ENCODE measurements at regions of chr16 and their contacts with region 1.

Region 1: DNA sequence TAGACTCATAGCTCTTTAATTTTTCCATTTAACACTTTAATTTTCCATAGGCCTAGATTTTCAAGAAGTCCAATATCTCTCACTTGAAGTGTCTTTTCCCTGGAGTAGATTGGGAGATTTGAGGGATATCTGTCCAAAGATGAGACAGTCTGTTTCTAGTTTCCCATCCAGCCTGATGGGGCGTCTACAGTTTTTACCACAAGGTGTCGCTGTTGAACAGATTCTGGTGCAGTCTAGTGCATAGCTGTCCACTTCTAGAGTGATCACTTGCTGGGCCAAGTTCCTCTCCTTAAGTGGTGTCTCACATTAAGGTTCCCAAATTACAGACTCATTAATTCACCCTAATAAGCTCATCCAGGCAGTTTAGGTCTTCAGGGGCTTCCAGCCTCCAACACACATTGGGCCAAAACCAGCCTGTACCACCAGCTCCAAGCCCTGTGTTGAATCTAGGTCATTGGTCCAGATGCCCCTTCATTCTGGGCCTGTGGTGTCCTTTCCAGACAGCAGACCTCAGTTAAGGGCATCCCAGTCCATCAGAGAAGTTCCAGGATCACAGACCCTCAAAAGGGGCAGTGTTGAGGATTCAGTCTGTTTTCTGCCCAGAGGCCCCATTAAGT is 9.4 kb downstream of the SNX20 start:
- DNase-seq: peak; percentile 79
- H3K4me3 Mint-ChIP-seq: no peak overlapping the region
- H3K27ac Mint-ChIP-seq: peak overlapping the region; percentile 28
- H3K4me1 Mint-ChIP-seq: peaks cover 43% of the 10 kb centered on the region
- H3K27me3 Mint-ChIP-seq: no peaks in the 10 kb centered on the region

Region 2: DNA sequence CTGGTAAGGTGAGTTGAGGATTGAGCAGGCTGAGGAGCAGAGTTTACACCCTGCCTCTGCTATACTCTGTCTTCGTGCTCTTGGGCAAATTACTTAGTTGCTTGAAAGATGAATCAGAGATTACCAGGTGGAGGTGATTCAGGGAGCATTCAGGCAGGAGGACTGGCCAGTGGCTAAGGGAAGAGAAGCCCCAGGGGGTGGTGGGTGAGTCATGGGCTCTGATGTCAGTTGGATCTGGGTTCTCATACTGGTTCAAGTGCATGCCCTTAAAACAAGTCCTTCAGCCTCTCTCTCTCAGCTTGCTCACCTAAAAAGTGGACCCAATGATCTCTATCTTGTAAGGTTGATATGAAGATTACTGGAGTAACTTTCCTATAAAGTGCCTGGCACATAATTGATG is 274.6 kb before region 1 on chr16:
- CTCF ChIA-PET with region 1: no interaction called
- POLR2A ChIA-PET with region 1: no interaction called
- intact Hi-C with region 1: no loop called
- DNase-seq: peak; percentile 23
- H3K4me3 Mint-ChIP-seq: no peak overlapping the region
- H3K27ac Mint-ChIP-seq: peak overlapping the region; percentile 23
- H3K4me1 Mint-ChIP-seq: peaks cover 21% of the 10 kb centered on the region
- H3K27me3 Mint-ChIP-seq: no peaks in the 10 kb centered on the region

Region 3: DNA sequence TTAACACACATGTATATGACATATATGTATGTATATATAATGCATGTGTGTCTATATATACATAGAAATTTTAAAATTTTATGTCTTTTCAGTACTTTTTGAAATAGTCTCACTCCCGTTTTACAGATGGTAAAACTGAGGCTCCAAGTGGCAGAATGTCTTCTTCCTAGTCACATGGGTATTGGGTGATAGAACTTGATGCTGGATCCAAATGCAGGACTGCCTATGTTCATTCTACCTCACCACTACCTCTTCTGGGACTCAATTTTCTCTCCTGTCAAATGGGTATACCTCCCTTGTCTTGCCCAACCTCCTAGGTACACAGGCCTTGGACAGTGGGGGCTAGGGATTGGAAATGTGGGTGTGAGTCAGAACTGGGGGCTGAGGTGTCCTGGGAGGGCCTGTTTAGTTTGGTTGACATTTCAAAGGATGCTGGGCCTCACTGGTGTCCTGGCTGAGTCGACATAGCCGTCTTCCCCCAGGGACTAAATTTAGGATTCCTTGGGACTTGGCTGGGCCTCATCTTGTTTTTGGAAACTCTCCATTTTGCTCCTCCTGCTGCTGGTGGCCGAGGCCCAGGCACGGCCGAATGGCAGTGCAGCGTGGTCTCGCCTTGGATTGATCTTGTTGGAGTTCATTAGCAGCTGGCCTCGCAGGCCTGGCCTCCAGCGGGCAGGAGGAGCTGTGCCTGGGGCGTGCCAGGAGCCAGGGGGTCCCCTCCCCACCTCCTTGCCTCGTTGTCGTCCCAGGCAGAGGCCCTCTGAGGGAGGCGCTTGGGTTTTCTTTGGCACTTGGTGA is 97.6 kb before region 1 on chr16:
- CTCF ChIA-PET with region 1: no interaction called
- POLR2A ChIA-PET with region 1: no interaction called
- intact Hi-C with region 1: no loop called
- DNase-seq: no peak
- H3K4me3 Mint-ChIP-seq: no peak overlapping the region
- H3K27ac Mint-ChIP-seq: no peak overlapping the region
- H3K4me1 Mint-ChIP-seq: no peaks in the 10 kb centered on the region
- H3K27me3 Mint-ChIP-seq: no peaks in the 10 kb centered on the region

Region 4: GRCh38 chr16:50629334-50629733 is 42.4 kb before region 1 on chr16:
- CTCF ChIA-PET with region 1: no interaction called
- POLR2A ChIA-PET with region 1: no interaction called
- intact Hi-C with region 1: no loop called
- DNase-seq: no peak
- H3K4me3 Mint-ChIP-seq: no peak overlapping the region
- H3K27ac Mint-ChIP-seq: no peak overlapping the region
- H3K4me1 Mint-ChIP-seq: peaks cover 19% of the 10 kb centered on the region
- H3K27me3 Mint-ChIP-seq: no peaks in the 10 kb centered on the region

Region 5: GRCh38 chr16:50735629-50736122 is 63.9 kb after region 1 on chr16:
- CTCF ChIA-PET with region 1: interaction called, 16 read pairs
- POLR2A ChIA-PET with region 1: interaction called, 3 read pairs
- intact Hi-C with region 1: no loop called
- DNase-seq: peak; percentile 61
- H3K4me3 Mint-ChIP-seq: no peak overlapping the region
- H3K27ac Mint-ChIP-seq: peak overlapping the region; percentile 10
- H3K4me1 Mint-ChIP-seq: peaks cover 54% of the 10 kb centered on the region
- H3K27me3 Mint-ChIP-seq: no peaks in the 10 kb centered on the region

Region 6: GRCh38 chr16:50756473-50756872 is 84.7 kb after region 1 on chr16:
- CTCF ChIA-PET with region 1: interaction called, 153 read pairs
- POLR2A ChIA-PET with region 1: interaction called, 5 read pairs
- intact Hi-C with region 1: no loop called
- DNase-seq: no peak
- H3K4me3 Mint-ChIP-seq: no peak overlapping the region
- H3K27ac Mint-ChIP-seq: no peak overlapping the region
- H3K4me1 Mint-ChIP-seq: peaks cover 73% of the 10 kb centered on the region
- H3K27me3 Mint-ChIP-seq: no peaks in the 10 kb centered on the region

Region 7: GRCh38 chr16:51184702-51185433 is 513.1 kb after region 1 on chr16:
- CTCF ChIA-PET with region 1: no interaction called
- POLR2A ChIA-PET with region 1: no interaction called
- intact Hi-C with region 1: no loop called
- DNase-seq: no peak
- H3K4me3 Mint-ChIP-seq: no peak overlapping the region
- H3K27ac Mint-ChIP-seq: no peak overlapping the region
- H3K4me1 Mint-ChIP-seq: no peaks in the 10 kb centered on the region
- H3K27me3 Mint-ChIP-seq: no peaks in the 10 kb centered on the region